Activated T-helper 2 cell treated with anti-CD3 and anti-CD28 coated beads, Interferon-gamma antibody, Interleukin-2, Interleukin-4, amounts not matched to agents 10 μg/mL and 5 μg/mL and 100 μg/mL, durations not matched to agents 14 hours and 24 hours and 36 hours (primary cell): ENCODE measurements at regions of chr21 and their contacts with region 1.

Region 1: GRCh38 chr21:32494934-32495703 is 82.6 kb downstream of the EVA1C start:
- DNase-seq: no peak
- H3K4me3 Mint-ChIP-seq: no peak overlapping the region
- H3K27ac Mint-ChIP-seq: no peak overlapping the region
- H3K4me1 Mint-ChIP-seq: no peaks in the 10 kb centered on the region
- H3K27me3 Mint-ChIP-seq: no peaks in the 10 kb centered on the region

Region 2: DNA sequence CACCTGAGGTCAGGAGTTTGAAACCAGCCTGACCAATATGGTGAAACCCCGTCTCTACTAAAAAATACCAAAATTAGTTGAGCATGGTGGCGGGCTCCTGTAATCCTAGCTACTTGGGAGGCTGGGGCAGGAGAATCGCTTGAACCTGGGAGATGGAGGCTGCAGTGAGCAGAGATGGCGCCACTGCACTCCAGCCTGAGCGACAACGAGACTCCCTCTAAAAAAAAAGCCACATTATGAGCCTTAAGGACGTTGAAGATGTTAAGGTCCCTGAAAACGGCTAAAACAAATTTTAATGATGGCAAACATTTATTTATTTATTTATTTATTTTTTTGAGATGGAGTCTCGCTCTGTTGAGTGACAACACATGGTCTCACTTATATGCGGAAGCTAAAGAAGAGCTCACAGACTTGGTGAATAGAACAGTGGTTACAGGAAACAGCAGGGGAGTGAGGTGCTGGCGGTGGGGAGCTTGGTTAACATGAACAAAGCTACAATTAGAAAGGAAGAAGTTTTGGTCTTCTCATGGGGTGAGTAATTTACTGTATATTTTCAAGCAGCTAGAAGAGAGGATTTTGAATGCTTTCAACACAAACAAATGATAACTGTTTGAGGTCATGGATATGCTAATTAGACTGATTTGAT is 43.2 kb after region 1 on chr21:
- intact Hi-C with region 1: no loop called
- DNase-seq: no peak
- H3K4me3 Mint-ChIP-seq: no peak overlapping the region
- H3K27ac Mint-ChIP-seq: no peak overlapping the region
- H3K4me1 Mint-ChIP-seq: peaks cover 1% of the 10 kb centered on the region
- H3K27me3 Mint-ChIP-seq: no peaks in the 10 kb centered on the region

Region 3: GRCh38 chr21:32612075-32612998 is 117.2 kb after region 1 on chr21 and contains the start of gene CFAP298:
- intact Hi-C with region 1: loop called (anchors 2 kb)
- DNase-seq: peak; percentile 86
- H3K4me3 Mint-ChIP-seq: peak within 1 kb of the TSS; percentile 99
- H3K27ac Mint-ChIP-seq: peak within 1 kb of the TSS; percentile 89
- H3K4me1 Mint-ChIP-seq: peaks cover 4% of the 10 kb centered on the region
- H3K27me3 Mint-ChIP-seq: peaks cover 2% of the 10 kb centered on the region
- total RNA-seq, gene CFAP298: 44.5 and 48.6 TPM in 2 replicates

Region 4: GRCh38 chr21:32653311-32653901 is 158.3 kb after region 1 on chr21:
- intact Hi-C with region 1: no loop called
- DNase-seq: no peak
- H3K4me3 Mint-ChIP-seq: no peak overlapping the region
- H3K27ac Mint-ChIP-seq: no peak overlapping the region
- H3K4me1 Mint-ChIP-seq: peaks cover 24% of the 10 kb centered on the region
- H3K27me3 Mint-ChIP-seq: no peaks in the 10 kb centered on the region